ENCODE measurements at regions of chr2 and their contacts with region 1.

Region 1: DNA sequence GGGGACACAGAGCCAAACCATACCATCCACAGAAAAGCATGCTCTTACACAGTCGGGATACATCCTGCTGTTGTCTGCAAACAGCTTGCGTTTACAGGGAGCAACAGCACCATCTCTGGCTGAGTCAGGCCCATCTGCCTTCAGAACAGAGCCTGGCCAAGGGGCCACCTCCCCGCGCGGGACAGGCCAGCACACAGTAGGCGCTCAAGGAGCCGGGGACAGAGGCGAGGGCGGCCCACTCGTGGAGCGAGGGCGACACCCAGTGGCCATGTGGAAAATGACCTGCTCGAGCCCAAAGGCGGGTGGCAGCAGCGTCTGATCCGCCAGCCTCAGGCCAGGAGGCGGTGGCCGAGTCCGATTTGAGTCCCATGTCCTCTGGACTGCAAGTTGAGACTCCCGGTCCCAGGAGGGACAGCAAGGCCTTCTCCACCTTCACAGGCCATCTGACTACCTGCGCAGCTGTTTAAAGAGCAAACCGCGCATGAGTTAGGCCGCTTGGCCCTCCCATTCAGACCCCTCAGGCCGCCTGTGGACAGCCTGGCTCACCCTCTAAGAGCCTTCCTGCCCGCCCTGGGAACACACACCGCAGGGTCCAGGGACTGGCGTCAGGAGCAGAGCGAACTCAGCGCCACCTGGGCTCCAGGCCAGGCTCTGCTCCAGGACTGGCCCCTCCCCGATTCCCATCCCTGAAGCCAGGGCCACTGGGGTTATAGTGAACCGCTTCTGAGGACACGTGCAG is 38.3 kb downstream of the TTC32 start:
- DNase-seq: peak; percentile 72 to 85
- ATAC-seq: peak; percentile 85 to 96 (median 87)
- H3K4me3 ChIP-seq: peak overlapping the region; percentile 28
- H3K27ac ChIP-seq: no peak overlapping the region
- H3K4me1 ChIP-seq: peaks cover 6% of the 10 kb centered on the region
- H3K27me3 ChIP-seq: no peaks in the 10 kb centered on the region
- CTCF ChIP-seq: peak; percentile 97

Region 2: GRCh38 chr2:18387441-18388206 is 1475.8 kb before region 1 on chr2:
- intact Hi-C with region 1: loop called (anchors 5 to 10 kb)
- DNase-seq: peak; percentile 61 to 80
- ATAC-seq: peak; percentile 86 to 97 (median 90)
- H3K4me3 ChIP-seq: no peak overlapping the region
- H3K27ac ChIP-seq: no peak overlapping the region
- H3K4me1 ChIP-seq: peaks cover 3% of the 10 kb centered on the region
- H3K27me3 ChIP-seq: no peaks in the 10 kb centered on the region
- CTCF ChIP-seq: peak; percentile 97

Region 3: DNA sequence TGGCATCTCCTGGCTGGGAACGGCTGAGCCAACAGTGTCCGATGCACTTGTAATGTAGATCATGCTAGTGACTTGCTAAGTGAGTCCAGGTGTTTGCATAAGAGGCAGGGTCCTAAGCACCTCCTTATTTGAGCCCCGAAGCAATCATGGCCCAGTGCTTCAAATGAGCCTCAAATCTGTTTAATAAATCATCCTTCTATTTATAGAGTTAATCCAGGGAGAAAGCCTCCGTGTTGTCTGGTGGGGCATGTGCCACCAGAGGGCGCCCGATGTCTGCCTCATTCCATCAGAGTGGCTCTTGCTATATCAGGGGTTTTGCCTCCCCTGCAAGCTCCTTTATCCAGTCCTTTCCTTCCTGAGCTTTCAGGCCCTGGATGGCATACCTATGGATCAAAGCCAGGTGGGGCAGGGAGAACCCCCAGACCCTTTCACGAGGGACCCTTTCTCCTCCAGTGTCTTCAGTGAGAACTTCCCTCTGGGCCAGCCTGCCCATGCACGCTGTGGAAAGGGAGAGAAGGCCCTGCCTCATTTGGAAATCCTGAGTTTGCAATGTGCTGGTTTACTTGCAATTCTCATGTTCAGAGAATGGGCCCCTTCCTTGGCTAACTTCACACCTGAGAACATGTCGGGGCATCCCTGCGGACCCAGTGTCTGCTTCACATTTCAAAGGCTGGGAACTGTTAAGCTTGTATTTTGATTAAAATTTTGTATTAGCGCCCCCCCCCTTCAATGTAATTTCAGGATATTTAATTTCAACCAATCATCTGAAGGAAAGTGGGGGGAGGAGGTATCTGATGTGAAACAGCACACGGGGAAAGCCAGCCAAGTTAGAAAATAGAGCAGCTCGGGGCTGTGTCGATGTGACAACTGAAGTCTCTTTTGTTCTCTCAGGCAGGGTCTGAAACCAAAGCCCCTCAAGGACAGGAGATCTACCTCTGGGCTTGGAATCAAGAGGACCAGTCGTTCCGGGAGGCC is 1342.7 kb before region 1 on chr2:
- intact Hi-C with region 1: loop called (anchors 5 kb)
- DNase-seq: peak; percentile 89 to 93
- ATAC-seq: peak; percentile 90 to 98 (median 96)
- H3K4me3 ChIP-seq: no peak overlapping the region
- H3K27ac ChIP-seq: peak overlapping the region; percentile 42
- H3K4me1 ChIP-seq: peaks cover 23% of the 10 kb centered on the region
- H3K27me3 ChIP-seq: no peaks in the 10 kb centered on the region
- CTCF ChIP-seq: peak; percentile 93

Region 4: GRCh38 chr2:18749912-18750526 is 1113.5 kb before region 1 on chr2:
- intact Hi-C with region 1: loop called (anchors 2 to 5 kb)
- DNase-seq: peak in 1 of 2 donors; percentile 21
- ATAC-seq: peak in 3 of 4 donors; percentile 58 to 85 (median 59)
- H3K4me3 ChIP-seq: no peak overlapping the region
- H3K27ac ChIP-seq: no peak overlapping the region
- H3K4me1 ChIP-seq: peaks cover 23% of the 10 kb centered on the region
- H3K27me3 ChIP-seq: no peaks in the 10 kb centered on the region
- CTCF ChIP-seq: peak; percentile 77

Region 5: DNA sequence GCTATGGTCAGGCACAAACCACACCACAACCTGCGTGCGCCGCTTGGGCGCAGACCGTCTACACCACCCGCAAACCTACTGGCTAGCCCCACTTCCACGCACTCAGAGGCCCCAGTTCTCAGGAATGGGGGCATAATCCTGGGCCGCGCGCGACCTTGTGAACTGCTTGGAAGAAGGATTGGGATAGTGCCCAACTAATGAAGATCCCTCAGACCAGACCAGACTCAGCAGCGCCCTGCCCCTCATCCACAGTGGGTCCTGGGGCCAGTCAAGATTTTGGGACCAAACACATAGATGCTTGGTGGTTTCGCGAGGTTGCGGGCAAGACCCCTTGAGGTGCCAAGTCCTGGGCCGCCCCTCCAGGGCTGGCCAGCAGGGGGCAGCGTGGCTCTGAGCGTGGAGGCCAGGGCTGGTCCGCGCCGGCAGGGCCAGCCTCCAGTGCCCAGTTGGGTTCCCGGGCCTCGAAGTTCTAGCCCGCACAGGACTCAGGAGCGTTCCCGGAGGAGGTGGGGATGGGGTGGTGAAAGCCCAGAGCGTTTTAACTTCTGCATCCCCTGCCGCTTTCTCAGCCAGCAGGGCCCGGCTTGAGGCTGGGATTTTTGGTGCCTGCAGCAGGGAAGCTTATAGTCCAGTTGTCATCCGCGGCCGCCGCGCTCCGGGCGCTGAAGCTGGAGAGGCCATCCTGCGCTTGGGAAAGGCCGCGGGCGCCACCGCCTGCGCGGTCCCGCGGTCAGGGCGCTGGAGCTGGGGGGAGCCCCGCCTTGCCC is 513.4 kb before region 1 on chr2:
- intact Hi-C with region 1: loop called (anchors 5 kb)
- DNase-seq: peak; percentile 68 to 76
- ATAC-seq: peak in 3 of 4 donors; percentile 19 to 46 (median 27)
- H3K4me3 ChIP-seq: peak overlapping the region; percentile 38
- H3K27ac ChIP-seq: no peak overlapping the region
- H3K4me1 ChIP-seq: peaks cover 10% of the 10 kb centered on the region
- H3K27me3 ChIP-seq: no peaks in the 10 kb centered on the region
- CTCF ChIP-seq: peak; percentile 62

Region 6: GRCh38 chr2:19774805-19775176 is 88.7 kb before region 1 on chr2:
- intact Hi-C with region 1: loop called in 1 of 2 experiments (anchors 5 kb)
- DNase-seq: no peak
- ATAC-seq: no peak
- H3K4me3 ChIP-seq: no peak overlapping the region
- H3K27ac ChIP-seq: no peak overlapping the region
- H3K4me1 ChIP-seq: no peaks in the 10 kb centered on the region
- H3K27me3 ChIP-seq: no peaks in the 10 kb centered on the region
- CTCF ChIP-seq: no peak